ENCODE measurements at regions of chr12 and their contacts with region 1.

Region 1: DNA sequence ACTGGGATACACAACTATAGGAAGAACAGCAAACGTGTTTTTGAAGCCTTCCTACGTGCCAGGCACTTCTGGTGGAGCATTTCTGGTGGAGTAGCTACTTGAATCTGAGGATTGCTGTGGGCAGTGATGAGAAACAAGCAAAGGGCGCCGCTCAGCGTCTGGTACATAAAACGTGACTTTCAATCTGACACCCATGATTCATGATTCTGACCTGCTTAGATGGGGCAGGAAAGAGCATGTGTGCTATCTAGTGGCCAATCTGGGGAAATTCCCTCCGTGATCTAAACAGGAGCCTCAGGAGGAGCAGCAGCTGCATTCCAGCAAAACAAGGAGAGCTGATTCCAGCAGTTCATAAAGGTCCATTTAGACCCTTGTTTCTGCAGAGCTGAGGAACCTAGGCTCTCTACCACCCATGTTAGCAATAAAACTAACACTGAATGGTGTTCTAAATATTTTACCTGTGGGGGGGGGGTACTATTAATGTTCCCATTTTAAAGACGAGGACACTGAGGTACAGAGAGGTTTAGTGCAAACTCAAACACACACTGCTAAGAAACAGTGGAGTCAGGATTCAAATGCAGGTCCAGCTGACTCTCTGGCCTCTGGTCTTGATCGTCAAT is 37.8 kb downstream of the PAH start:
- DNase-seq: peak; percentile 86
- H3K4me3 Mint-ChIP-seq: no peak overlapping the region
- H3K27ac Mint-ChIP-seq: no peak overlapping the region
- H3K4me1 Mint-ChIP-seq: peaks cover 6% of the 10 kb centered on the region
- H3K27me3 Mint-ChIP-seq: peaks cover 33% of the 10 kb centered on the region
- CTCF ChIP-seq: peak; percentile 65

Region 2: GRCh38 chr12:101919447-101919846 is 959.8 kb before region 1 on chr12:
- CTCF ChIA-PET with region 1: interaction called, 6 read pairs
- POLR2A ChIA-PET with region 1: no interaction called
- intact Hi-C with region 1: loop called (anchors 1 kb)
- DNase-seq: no peak
- H3K4me3 Mint-ChIP-seq: no peak overlapping the region
- H3K27ac Mint-ChIP-seq: no peak overlapping the region
- H3K4me1 Mint-ChIP-seq: peaks cover 17% of the 10 kb centered on the region
- H3K27me3 Mint-ChIP-seq: no peaks in the 10 kb centered on the region
- CTCF ChIP-seq: no peak

Region 3: DNA sequence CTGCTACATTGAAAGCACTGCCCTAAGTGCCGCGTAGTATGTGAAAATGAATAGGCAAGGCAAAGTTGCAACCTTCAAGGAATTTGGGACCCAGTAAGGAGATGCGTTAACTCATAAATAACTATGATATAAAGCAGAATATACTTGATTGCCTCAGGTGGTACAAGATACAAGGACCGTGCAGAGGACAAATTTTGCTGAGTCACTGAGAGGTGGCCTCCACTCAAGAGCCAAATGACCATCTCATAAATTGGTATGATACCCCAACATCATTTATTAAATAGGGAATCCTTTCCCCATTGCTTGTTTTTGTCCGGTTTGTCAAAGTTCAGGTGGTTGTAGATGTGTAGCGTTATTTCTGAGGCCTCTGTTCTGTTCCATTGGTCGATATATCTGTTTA is 434.5 kb before region 1 on chr12:
- CTCF ChIA-PET with region 1: no interaction called
- POLR2A ChIA-PET with region 1: no interaction called
- intact Hi-C with region 1: no loop called
- DNase-seq: no peak
- H3K4me3 Mint-ChIP-seq: no peak overlapping the region
- H3K27ac Mint-ChIP-seq: no peak overlapping the region
- H3K4me1 Mint-ChIP-seq: no peaks in the 10 kb centered on the region
- H3K27me3 Mint-ChIP-seq: no peaks in the 10 kb centered on the region
- CTCF ChIP-seq: no peak

Region 4: GRCh38 chr12:102811110-102811737 is 68.0 kb before region 1 on chr12:
- CTCF ChIA-PET with region 1: interaction called, 7 read pairs
- POLR2A ChIA-PET with region 1: no interaction called
- intact Hi-C with region 1: loop called (anchors 5 kb)
- DNase-seq: peak; percentile 30
- H3K4me3 Mint-ChIP-seq: no peak overlapping the region
- H3K27ac Mint-ChIP-seq: no peak overlapping the region
- H3K4me1 Mint-ChIP-seq: peaks cover 10% of the 10 kb centered on the region
- H3K27me3 Mint-ChIP-seq: peaks cover 31% of the 10 kb centered on the region
- CTCF ChIP-seq: peak; percentile 44

Region 5: DNA sequence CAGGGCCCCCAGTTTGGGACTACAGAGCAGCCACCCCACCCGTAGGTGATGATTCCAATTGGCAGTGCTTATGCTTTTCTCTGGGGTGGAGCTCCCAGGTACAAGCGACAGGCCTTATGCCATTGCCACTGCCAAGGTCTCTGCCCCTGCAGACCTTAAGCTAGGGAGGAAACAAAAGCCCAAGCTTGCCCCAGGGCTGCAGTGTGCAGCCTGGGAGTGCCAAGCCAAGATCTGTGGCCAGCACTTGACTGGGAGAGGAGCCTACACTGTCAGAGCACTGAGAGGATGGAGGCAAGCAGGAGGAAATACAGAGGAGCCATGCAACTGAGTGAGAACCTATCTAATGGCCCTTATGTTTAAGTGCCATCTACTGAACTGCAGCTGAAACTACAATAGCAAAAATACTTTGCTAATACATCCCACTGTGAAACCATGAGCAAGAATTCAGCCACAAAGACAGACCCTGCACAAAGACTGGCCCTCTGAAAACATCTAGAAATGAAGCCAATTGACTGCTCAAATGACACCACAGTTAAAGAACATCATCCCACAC is 60.5 kb after region 1 on chr12:
- CTCF ChIA-PET with region 1: interaction called, 22 read pairs
- POLR2A ChIA-PET with region 1: no interaction called
- intact Hi-C with region 1: no loop called
- DNase-seq: no peak
- H3K4me3 Mint-ChIP-seq: no peak overlapping the region
- H3K27ac Mint-ChIP-seq: no peak overlapping the region
- H3K4me1 Mint-ChIP-seq: no peaks in the 10 kb centered on the region
- H3K27me3 Mint-ChIP-seq: no peaks in the 10 kb centered on the region
- CTCF ChIP-seq: no peak

Region 6: DNA sequence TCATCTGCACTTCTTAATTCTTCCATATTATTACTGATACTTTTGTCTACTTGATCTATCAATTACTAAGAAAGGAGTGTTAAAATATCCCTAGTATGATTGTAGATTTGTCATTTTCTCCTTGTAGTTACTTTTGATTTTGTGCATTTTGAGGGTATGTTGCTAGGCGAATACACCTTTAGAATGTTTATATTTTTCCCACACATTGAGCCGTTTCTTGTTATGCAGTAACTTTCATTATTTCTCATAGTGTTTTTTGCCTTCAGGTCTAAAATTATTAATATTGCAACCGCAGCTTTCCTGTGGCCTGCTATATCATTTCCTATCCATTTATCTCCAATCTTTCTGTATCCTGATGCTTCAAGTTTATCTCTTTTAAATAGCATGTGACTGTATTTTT is 661.1 kb after region 1 on chr12:
- CTCF ChIA-PET with region 1: interaction called, 169 read pairs
- POLR2A ChIA-PET with region 1: no interaction called
- intact Hi-C with region 1: no loop called
- DNase-seq: no peak
- H3K4me3 Mint-ChIP-seq: no peak overlapping the region
- H3K27ac Mint-ChIP-seq: no peak overlapping the region
- H3K4me1 Mint-ChIP-seq: no peaks in the 10 kb centered on the region
- H3K27me3 Mint-ChIP-seq: no peaks in the 10 kb centered on the region
- CTCF ChIP-seq: no peak